Prostate gland (tissue), 2 donors: ENCODE measurements at regions of chr2 and their contacts with region 1.

Region 1: GRCh38 chr2:152335010-152335725 is at the start of gene FMNL2:
- DNase-seq: peak; percentile 76
- H3K4me3 ChIP-seq: peak within 1 kb of the TSS; percentile 81
- H3K27ac ChIP-seq: peak within 1 kb of the TSS; percentile 70 to 81
- H3K4me1 ChIP-seq: peaks cover 4% of the 10 kb centered on the region
- H3K27me3 ChIP-seq: no peaks in the 10 kb centered on the region
- CTCF ChIP-seq: peak in 1 of 4 experiments; percentile 19
- POLR2A ChIP-seq: peak; percentile 82
- total RNA-seq, gene FMNL2: 9.8 to 19.4 TPM

Region 2: DNA sequence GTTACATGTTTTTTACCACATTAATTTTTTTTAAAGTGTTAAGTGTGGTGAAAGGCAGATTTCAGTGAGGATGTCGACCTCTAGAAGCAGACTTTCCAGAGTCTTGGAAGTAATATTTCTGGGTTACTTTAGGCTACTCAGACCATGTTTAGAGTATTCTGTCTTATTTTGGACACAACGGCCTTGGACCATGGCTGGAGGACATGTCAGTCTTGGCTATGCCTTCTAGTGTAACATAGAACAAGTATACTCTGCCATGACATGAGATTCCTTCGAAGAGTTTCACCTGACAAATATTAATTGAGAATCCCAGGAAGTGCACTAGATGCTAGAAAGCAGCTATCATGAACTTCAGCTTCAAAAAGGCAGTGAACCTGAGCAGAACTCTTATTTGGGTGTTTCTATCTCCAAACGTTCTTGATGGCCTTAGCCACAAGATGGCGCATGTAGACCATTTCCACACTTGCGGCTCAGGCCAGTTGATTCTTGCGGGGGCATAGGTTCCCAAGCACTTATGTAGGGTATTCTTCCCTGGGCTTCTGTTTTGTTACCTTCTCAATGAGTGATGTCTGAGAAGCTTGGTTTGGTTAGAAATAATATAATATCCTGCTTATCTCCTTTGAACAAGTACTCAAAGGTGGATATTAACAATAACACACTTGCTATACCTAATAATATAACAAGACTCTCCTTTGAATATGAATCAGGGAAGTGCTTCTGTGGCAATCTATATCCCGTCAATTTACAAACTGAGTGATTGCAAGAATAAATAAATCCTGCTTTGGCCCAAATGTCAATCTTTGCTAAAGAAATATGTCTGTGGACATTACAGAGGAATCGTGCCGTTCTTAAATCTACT is 298.3 kb before region 1 on chr2:
- intact Hi-C with region 1: loop called (anchors 10 kb)
- DNase-seq: peak; percentile 76
- H3K4me3 ChIP-seq: no peak overlapping the region
- H3K27ac ChIP-seq: no peak overlapping the region
- H3K4me1 ChIP-seq: no peaks in the 10 kb centered on the region
- H3K27me3 ChIP-seq: no peaks in the 10 kb centered on the region
- CTCF ChIP-seq: peak; percentile 57 to 82 (median 76)
- POLR2A ChIP-seq: no peak

Region 3: DNA sequence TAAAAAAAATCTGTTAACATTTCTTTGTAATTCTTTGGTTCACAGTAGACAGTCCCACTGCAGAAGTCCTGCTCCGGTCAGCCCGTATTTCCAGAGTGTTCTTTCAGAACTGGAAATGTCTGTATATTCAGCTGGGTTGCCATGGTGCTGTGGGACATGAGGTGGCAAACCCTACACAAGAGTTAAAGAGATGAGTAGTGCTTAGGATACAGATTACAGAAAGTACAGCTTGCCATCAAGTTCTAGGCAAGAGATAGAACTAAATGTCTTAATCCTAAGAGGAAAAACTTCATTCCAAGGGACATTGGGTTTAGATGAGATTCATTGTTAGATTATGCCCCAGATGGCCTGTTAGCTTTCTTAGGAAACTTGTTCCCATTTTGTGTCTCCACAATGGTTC is 59.9 kb after region 1 on chr2:
- intact Hi-C with region 1: loop called (anchors 5 kb)
- DNase-seq: no peak
- H3K4me3 ChIP-seq: no peak overlapping the region
- H3K27ac ChIP-seq: peak overlapping the region in 1 of 2 donors; percentile 41
- H3K4me1 ChIP-seq: no peaks in the 10 kb centered on the region
- H3K27me3 ChIP-seq: no peaks in the 10 kb centered on the region
- CTCF ChIP-seq: no peak
- POLR2A ChIP-seq: no peak

Region 4: GRCh38 chr2:152497481-152498052 is 162.4 kb after region 1 on chr2:
- intact Hi-C with region 1: loop called (anchors 10 kb)
- DNase-seq: no peak
- H3K4me3 ChIP-seq: no peak overlapping the region
- H3K27ac ChIP-seq: no peak overlapping the region
- H3K4me1 ChIP-seq: no peaks in the 10 kb centered on the region
- H3K27me3 ChIP-seq: no peaks in the 10 kb centered on the region
- CTCF ChIP-seq: no peak
- POLR2A ChIP-seq: no peak

Region 5: GRCh38 chr2:152717228-152718075 is 382.3 kb after region 1 on chr2 and contains the start of gene PRPF40A:
- intact Hi-C with region 1: loop called (anchors 10 kb)
- DNase-seq: peak; percentile 98
- H3K4me3 ChIP-seq: peak within 1 kb of the TSS; percentile 79 to 87
- H3K27ac ChIP-seq: peak within 1 kb of the TSS; percentile 97 to 98
- H3K4me1 ChIP-seq: no peaks in the 10 kb centered on the region
- H3K27me3 ChIP-seq: no peaks in the 10 kb centered on the region
- CTCF ChIP-seq: peak in 2 of 4 experiments; percentile 31 to 46
- POLR2A ChIP-seq: peak; percentile 65
- total RNA-seq, gene PRPF40A: 82.6 to 97.9 TPM